K562 (cell line): ENCODE measurements at regions of chr9 and their contacts with region 1.

Region 1: GRCh38 chr9:70484210-70485130 is 70.0 kb upstream of the KLF9 start:
- DNase-seq: peak; percentile 72 to 85 (median 76)
- ATAC-seq: peak; percentile 93
- H3K4me3 ChIP-seq: no peak overlapping the region
- H3K27ac ChIP-seq: peak overlapping the region; percentile 99
- H3K4me1 ChIP-seq: peaks cover 15 to 45% of the 10 kb centered on the region in 2 experiments; a peak in 4 of 5 replicates
- H3K27me3 ChIP-seq: no peaks in the 10 kb centered on the region
- CTCF ChIP-seq: peak; percentile 66 to 80 (median 72)
- EP300 ChIP-seq: peak; percentile 27
- POLR2A ChIP-seq: no peak
- RAD21 ChIP-seq: peak; percentile 66 to 76

Region 2: GRCh38 chr9:70258692-70259511 is 225.6 kb before region 1 on chr9 and contains the start of gene SMC5:
- CTCF ChIA-PET with region 1: no interaction called
- POLR2A ChIA-PET with region 1: no interaction called
- in situ Hi-C with region 1: no loop called
- intact Hi-C with region 1: loop called (anchors 10 kb)
- DNase-seq: peak; percentile 80 to 90 (median 82)
- ATAC-seq: peak; percentile 88
- H3K4me3 ChIP-seq: peak within 1 kb of the TSS; percentile 88
- H3K27ac ChIP-seq: peak within 1 kb of the TSS; percentile 95
- H3K4me1 ChIP-seq: peaks cover 22 to 26% of the 10 kb centered on the region in 2 experiments; a peak in 4 of 5 replicates
- H3K27me3 ChIP-seq: no peaks in the 10 kb centered on the region
- CTCF ChIP-seq: no peak
- EP300 ChIP-seq: no peak
- POLR2A ChIP-seq: peak; percentile 90
- RAD21 ChIP-seq: no peak
- polyA plus RNA-seq, gene SMC5: 3.5 to 5.1 TPM

Region 3: DNA sequence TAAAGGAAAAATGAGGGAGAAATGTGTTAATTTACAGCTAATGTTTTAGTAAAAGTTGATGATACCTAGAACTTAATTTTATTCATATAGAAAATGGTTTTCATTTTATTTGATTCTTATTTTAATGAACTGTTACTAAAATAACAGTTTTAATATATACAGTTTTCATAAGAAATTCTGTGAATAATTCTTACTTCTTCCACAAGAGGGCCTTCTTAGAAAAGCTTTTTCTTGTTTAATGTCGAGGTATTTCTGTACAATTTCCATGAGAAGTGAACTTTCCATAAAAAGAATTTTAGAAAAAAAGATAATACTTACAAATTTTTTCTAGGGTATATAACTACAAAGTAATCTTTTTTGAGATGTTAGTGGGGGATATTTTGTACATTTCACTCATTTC is 143.9 kb before region 1 on chr9:
- CTCF ChIA-PET with region 1: interaction called, 7 read pairs
- POLR2A ChIA-PET with region 1: no interaction called
- in situ Hi-C with region 1: no loop called
- intact Hi-C with region 1: loop called (anchors 2 kb)
- DNase-seq: peak in 2 of 4 experiments; percentile 6 to 7
- ATAC-seq: no peak
- H3K4me3 ChIP-seq: no peak overlapping the region
- H3K27ac ChIP-seq: no peak overlapping the region
- H3K4me1 ChIP-seq: no peaks in the 10 kb centered on the region; a peak in 1 of 5 replicates
- H3K27me3 ChIP-seq: no peaks in the 10 kb centered on the region
- CTCF ChIP-seq: peak in 1 of 3 experiments; percentile 46; a peak in 3 of 6 replicates
- EP300 ChIP-seq: no peak
- POLR2A ChIP-seq: no peak
- RAD21 ChIP-seq: peak; percentile 44 to 67